Endothelial cell of umbilical vein (primary cell): ENCODE measurements at regions of chr3 and their contacts with region 1.

Region 1: GRCh38 chr3:49839193-49839809 is 17.1 kb downstream of the TRAIP start:
- DNase-seq: peak; percentile 82
- H3K4me3 ChIP-seq: no peak overlapping the region
- H3K27ac ChIP-seq: no peak overlapping the region
- H3K4me1 ChIP-seq: peaks cover 15% of the 10 kb centered on the region
- H3K27me3 ChIP-seq: no peaks in the 10 kb centered on the region
- CTCF ChIP-seq: peak; percentile 82 to 93
- POLR2A ChIP-seq: no peak

Region 2: DNA sequence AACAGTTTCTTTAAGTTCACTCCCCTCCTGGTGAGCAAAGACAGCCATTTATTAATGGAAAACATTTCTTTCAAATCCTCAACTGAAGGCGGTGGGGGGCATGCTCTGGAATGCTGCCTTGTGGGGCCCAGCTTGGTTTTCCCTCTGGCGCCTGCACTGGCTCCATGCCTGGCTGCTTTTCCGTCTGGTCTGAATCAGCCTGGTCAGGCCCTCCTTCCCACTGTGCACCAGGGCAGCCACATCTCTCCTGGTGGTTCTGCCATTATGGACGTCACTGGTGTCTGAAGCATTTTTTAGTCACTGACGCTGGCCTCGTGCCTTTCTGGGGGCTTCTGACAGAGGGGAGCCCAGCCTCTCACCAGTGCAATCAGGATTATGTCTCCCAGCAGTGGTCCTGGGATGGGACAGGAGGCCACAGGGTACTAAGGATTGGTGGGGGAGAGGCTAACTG is 222.8 kb before region 1 on chr3:
- CTCF ChIA-PET with region 1: no interaction called
- POLR2A ChIA-PET with region 1: no interaction called
- dilution Hi-C with region 1: no loop called
- intact Hi-C with region 1: no loop called
- DNase-seq: no peak
- H3K4me3 ChIP-seq: no peak overlapping the region
- H3K27ac ChIP-seq: no peak overlapping the region
- H3K4me1 ChIP-seq: no peaks in the 10 kb centered on the region
- H3K27me3 ChIP-seq: peaks cover 4 to 9% of the 10 kb centered on the region in 2 experiments
- CTCF ChIP-seq: no peak
- POLR2A ChIP-seq: no peak

Region 3: GRCh38 chr3:49647741-49648140 is 191.6 kb before region 1 on chr3:
- CTCF ChIA-PET with region 1: no interaction called
- POLR2A ChIA-PET with region 1: no interaction called
- dilution Hi-C with region 1: no loop called
- intact Hi-C with region 1: no loop called
- DNase-seq: no peak
- H3K4me3 ChIP-seq: no peak overlapping the region
- H3K27ac ChIP-seq: no peak overlapping the region
- H3K4me1 ChIP-seq: no peaks in the 10 kb centered on the region
- H3K27me3 ChIP-seq: no peaks in the 10 kb centered on the region
- CTCF ChIP-seq: no peak
- POLR2A ChIP-seq: no peak

Region 4: GRCh38 chr3:49703443-49703927 is 135.8 kb before region 1 on chr3:
- CTCF ChIA-PET with region 1: interaction called, 27 read pairs
- POLR2A ChIA-PET with region 1: no interaction called
- dilution Hi-C with region 1: no loop called
- intact Hi-C with region 1: loop called (anchors 1 kb)
- DNase-seq: peak; percentile 59
- H3K4me3 ChIP-seq: no peak overlapping the region
- H3K27ac ChIP-seq: no peak overlapping the region
- H3K4me1 ChIP-seq: peaks cover 5% of the 10 kb centered on the region
- H3K27me3 ChIP-seq: no peaks in the 10 kb centered on the region
- CTCF ChIP-seq: peak; percentile 75 to 96
- POLR2A ChIP-seq: no peak

Region 5: GRCh38 chr3:49813497-49814174 is 25.7 kb before region 1 on chr3 and contains the start of gene UBA7:
- CTCF ChIA-PET with region 1: interaction called, 545 read pairs
- POLR2A ChIA-PET with region 1: interaction called, 4 read pairs
- dilution Hi-C with region 1: no loop called
- intact Hi-C with region 1: no loop called
- DNase-seq: peak; percentile 78
- H3K4me3 ChIP-seq: peak within 1 kb of the TSS; percentile 8 to 48 (median 17)
- H3K27ac ChIP-seq: peak within 1 kb of the TSS; percentile 44
- H3K4me1 ChIP-seq: peaks cover 13% of the 10 kb centered on the region
- H3K27me3 ChIP-seq: no peaks in the 10 kb centered on the region
- CTCF ChIP-seq: no peak
- POLR2A ChIP-seq: no peak
- total RNA-seq, gene UBA7: 41.9 and 57.4 TPM in 2 replicates

Region 6: GRCh38 chr3:49899815-49900214 is 60.5 kb after region 1 on chr3:
- CTCF ChIA-PET with region 1: interaction called, 65 read pairs
- POLR2A ChIA-PET with region 1: no interaction called
- dilution Hi-C with region 1: no loop called
- intact Hi-C with region 1: no loop called
- DNase-seq: peak; percentile 24
- H3K4me3 ChIP-seq: no peak overlapping the region
- H3K27ac ChIP-seq: no peak overlapping the region
- H3K4me1 ChIP-seq: peaks cover 6% of the 10 kb centered on the region
- H3K27me3 ChIP-seq: no peaks in the 10 kb centered on the region
- CTCF ChIP-seq: peak; percentile 37 to 59
- POLR2A ChIP-seq: no peak

Region 7: GRCh38 chr3:50088725-50089608 is 249.7 kb after region 1 on chr3 and contains the start of gene RBM5:
- CTCF ChIA-PET with region 1: no interaction called
- POLR2A ChIA-PET with region 1: no interaction called
- dilution Hi-C with region 1: no loop called
- intact Hi-C with region 1: loop called (anchors 2 kb)
- DNase-seq: peak; percentile 92
- H3K4me3 ChIP-seq: peak within 1 kb of the TSS; percentile 62 to 82 (median 82)
- H3K27ac ChIP-seq: peak within 1 kb of the TSS; percentile 90
- H3K4me1 ChIP-seq: peaks cover 14% of the 10 kb centered on the region
- H3K27me3 ChIP-seq: no peaks in the 10 kb centered on the region
- CTCF ChIP-seq: no peak
- POLR2A ChIP-seq: peak; percentile 89
- total RNA-seq, gene RBM5: 188 and 190 TPM in 2 replicates